CD4-positive, alpha-beta T cell (primary cell): ENCODE measurements at regions of chr17 and their contacts with region 1.

Region 1: DNA sequence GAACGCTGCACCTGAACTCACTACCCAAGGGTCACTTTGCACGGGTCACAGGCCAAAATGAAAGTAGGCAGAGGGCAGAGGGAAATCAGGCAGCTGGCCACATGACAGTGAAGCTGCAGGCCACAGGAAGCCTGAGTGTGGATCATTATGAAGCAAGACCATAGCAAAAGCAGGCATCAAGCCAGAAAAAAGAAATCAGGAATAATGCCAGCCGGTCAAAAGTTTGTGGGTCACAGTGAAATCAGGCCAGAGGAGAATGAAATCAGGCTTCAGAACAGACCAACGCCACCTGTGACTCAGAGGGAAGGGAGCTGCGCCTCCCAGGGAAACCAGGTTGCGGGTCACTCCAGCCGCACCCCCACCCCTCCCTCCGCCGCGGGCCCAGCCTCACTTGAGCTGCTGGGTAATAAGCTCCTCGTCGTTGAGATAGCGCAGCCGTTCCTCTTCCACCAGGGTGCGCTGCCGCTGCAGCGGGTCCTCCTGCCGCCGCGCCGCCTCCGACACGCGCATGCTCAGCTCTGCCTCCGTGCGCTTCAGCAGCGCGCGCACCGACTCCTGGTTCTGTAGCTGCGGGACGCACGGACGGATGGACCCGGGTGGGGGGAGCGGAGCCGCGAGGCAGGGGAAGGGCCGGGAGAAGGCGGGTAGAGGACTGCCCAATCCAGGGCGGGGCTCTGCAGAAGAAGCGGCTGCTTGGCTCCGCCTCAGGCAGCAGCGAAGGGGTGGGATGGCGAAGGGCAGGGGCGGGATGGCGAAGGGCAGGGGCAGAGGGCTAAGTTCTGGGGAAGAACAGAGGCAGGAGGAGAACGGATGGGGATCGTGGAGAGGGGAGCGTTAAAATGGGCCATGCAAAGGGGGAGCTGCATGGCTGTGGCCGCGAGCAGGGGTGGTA is 47.7 kb downstream of the SRCIN1 start:
- DNase-seq: peak; percentile 80 to 95 (median 86)
- ATAC-seq: peak; percentile 71
- H3K4me3 ChIP-seq: peak overlapping the region; percentile 90
- H3K4me3 Mint-ChIP-seq: peak overlapping the region; percentile 96
- H3K27ac ChIP-seq: no peak overlapping the region
- H3K27ac Mint-ChIP-seq: peak overlapping the region; percentile 35
- H3K4me1 ChIP-seq: peaks cover 52% of the 10 kb centered on the region
- H3K4me1 Mint-ChIP-seq: peaks cover 26% of the 10 kb centered on the region
- H3K27me3 ChIP-seq: peaks cover 31 to 33% of the 10 kb centered on the region in 2 experiments
- H3K27me3 Mint-ChIP-seq: peaks cover 39% of the 10 kb centered on the region
- CTCF ChIP-seq: peak; percentile 90

Region 2: DNA sequence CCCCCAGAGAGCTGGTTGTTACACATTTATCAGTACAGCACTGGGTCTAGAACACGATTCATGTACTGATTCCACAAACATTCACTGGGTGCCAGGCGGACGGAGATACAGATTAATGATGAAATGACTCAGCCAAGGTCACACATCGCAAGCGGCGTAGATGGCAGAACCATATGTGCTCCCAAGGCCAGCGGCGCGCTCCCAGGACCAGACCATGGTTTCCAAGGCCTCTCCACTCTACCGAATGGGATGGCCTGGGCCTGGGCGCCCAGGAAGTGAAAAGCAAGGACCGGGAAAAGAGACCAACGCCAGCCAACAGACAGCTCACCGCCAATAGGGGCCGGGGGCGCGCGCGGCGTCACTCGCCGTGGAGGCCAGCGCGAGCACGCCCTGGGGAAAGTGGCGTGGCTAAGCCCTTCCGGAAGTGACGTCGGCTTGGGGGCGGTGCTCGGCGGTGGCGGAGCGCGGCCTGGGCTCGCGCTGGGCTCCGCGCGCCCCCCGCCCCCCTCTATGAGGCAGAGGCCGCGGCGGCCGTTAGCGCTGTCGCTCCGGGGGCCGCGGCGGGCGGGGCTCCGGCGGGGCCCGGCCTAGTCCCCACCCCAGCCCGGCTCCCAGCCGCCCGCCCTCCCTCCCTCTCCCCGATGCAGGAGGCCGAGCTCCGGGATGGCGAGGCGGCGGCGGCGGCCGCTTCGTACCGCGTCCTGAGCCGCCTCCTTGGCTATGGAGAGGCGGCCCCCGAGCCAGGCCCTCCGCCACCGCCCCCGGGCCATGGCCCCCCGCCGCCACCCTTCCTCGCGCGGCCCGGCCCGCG is 206.5 kb before region 1 on chr17 and contains the start of gene SOCS7:
- CTCF ChIA-PET with region 1: no interaction called
- POLR2A ChIA-PET with region 1: no interaction called
- intact Hi-C with region 1: loop called in 1 of 2 experiments (anchors 5 kb)
- DNase-seq: peak; percentile 82 to 98 (median 92)
- ATAC-seq: peak; percentile 84
- H3K4me3 ChIP-seq: peak within 1 kb of the TSS; percentile 83
- H3K4me3 Mint-ChIP-seq: peak within 1 kb of the TSS; percentile 99
- H3K27ac ChIP-seq: peak within 1 kb of the TSS; percentile 54 to 83
- H3K27ac Mint-ChIP-seq: peak within 1 kb of the TSS; percentile 83
- H3K4me1 ChIP-seq: peaks cover 34% of the 10 kb centered on the region
- H3K4me1 Mint-ChIP-seq: peaks cover 50% of the 10 kb centered on the region
- H3K27me3 ChIP-seq: no peaks in the 10 kb centered on the region
- H3K27me3 Mint-ChIP-seq: no peaks in the 10 kb centered on the region
- CTCF ChIP-seq: no peak
- total RNA-seq, gene SOCS7: 13.7 to 16.9 TPM

Region 3: DNA sequence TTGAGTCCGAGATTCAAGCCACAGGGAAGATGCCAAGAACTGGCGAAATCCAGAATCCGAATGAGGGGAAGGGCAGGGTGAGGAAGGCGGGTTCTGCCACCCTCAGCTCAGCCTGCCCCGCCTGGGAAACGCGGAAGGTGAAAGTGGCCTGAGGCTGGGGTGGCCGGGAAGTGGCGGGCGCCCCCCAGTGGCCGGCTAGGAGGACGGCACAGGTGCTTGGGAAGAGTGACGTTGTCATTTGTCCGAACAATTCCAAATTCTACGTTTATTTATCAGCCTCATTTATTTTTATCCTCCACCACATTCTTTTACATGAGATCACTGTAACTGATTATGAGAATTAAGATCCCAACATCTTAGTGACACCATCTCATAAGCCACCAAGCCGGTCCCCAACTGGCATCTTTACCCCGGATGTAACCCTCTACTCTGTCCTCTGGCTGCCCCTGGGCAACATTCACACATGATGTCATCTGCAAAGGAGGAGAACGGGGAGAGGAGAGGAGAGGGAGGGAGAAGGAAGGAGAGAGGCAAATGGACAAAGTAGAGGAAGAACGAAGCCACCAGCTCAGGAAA is 26.4 kb after region 1 on chr17:
- CTCF ChIA-PET with region 1: interaction called, 97 read pairs
- POLR2A ChIA-PET with region 1: interaction called, 16 read pairs
- intact Hi-C with region 1: loop called (anchors 1 kb)
- DNase-seq: peak in 13 of 14 experiments; percentile 22 to 77 (median 51)
- ATAC-seq: peak; percentile 88
- H3K4me3 ChIP-seq: no peak overlapping the region
- H3K4me3 Mint-ChIP-seq: no peak overlapping the region
- H3K27ac ChIP-seq: no peak overlapping the region
- H3K27ac Mint-ChIP-seq: no peak overlapping the region
- H3K4me1 ChIP-seq: peaks cover 21% of the 10 kb centered on the region
- H3K4me1 Mint-ChIP-seq: peaks cover 9% of the 10 kb centered on the region
- H3K27me3 ChIP-seq: peaks cover 64 to 85% of the 10 kb centered on the region in 2 experiments
- H3K27me3 Mint-ChIP-seq: peaks cover 86% of the 10 kb centered on the region
- CTCF ChIP-seq: peak; percentile 91

Region 4: DNA sequence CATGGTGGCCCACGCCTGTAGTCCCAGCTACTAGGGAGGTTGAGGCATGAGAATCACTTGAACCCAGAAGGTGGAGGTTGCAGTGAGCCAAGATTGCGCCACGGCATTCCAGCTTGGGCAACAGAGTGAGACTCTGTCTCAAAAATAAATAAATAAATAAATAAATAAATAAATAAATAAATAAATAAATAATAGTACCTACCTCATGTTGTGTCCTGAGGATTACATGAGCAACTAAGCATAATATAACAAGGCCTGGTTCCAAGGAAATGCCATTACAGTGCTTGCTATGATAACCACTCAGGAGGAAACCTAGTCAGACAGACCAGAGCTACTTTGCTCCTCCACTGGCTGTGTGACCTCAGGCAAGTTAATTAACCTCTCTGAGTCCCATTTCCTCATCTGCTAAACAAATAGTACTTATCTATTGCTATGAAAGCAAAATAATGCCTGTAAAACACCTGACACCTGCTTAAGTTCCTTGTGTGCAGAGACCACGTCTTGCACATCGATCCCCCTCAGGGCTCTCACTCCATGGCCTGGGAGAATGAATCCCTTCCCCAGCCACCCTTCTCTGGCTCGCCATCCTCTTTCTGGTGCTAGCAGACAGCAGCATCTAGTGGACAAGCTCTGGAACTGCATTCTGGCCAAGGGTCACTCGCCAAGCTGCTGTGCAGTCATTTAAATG is 109.2 kb after region 1 on chr17:
- CTCF ChIA-PET with region 1: interaction called, 56 read pairs
- POLR2A ChIA-PET with region 1: interaction called, 20 read pairs
- intact Hi-C with region 1: loop called (anchors 1 kb)
- DNase-seq: peak; percentile 18 to 74 (median 33)
- ATAC-seq: peak; percentile 60
- H3K4me3 ChIP-seq: no peak overlapping the region
- H3K4me3 Mint-ChIP-seq: no peak overlapping the region
- H3K27ac ChIP-seq: no peak overlapping the region
- H3K27ac Mint-ChIP-seq: no peak overlapping the region
- H3K4me1 ChIP-seq: no peaks in the 10 kb centered on the region
- H3K4me1 Mint-ChIP-seq: peaks cover 5% of the 10 kb centered on the region
- H3K27me3 ChIP-seq: peaks cover 36 to 42% of the 10 kb centered on the region in 2 experiments
- H3K27me3 Mint-ChIP-seq: peaks cover 73% of the 10 kb centered on the region
- CTCF ChIP-seq: peak; percentile 98

Region 5: GRCh38 chr17:38729886-38730525 is 171.9 kb after region 1 on chr17 and contains the start of gene CISD3:
- CTCF ChIA-PET with region 1: interaction called, 17 read pairs
- POLR2A ChIA-PET with region 1: interaction called, 11 read pairs
- intact Hi-C with region 1: loop called (anchors 1 kb)
- DNase-seq: peak; percentile 67 to 96 (median 84)
- ATAC-seq: peak; percentile 70
- H3K4me3 ChIP-seq: peak within 1 kb of the TSS; percentile 71
- H3K4me3 Mint-ChIP-seq: peak within 1 kb of the TSS; percentile 99
- H3K27ac ChIP-seq: peak within 1 kb of the TSS; percentile 60 to 80
- H3K27ac Mint-ChIP-seq: peak within 1 kb of the TSS; percentile 89
- H3K4me1 ChIP-seq: peaks cover 89% of the 10 kb centered on the region
- H3K4me1 Mint-ChIP-seq: peaks cover 85% of the 10 kb centered on the region
- H3K27me3 ChIP-seq: no peaks in the 10 kb centered on the region
- H3K27me3 Mint-ChIP-seq: no peaks in the 10 kb centered on the region
- CTCF ChIP-seq: peak; percentile 54
- total RNA-seq, gene CISD3: 4.7 to 5.7 TPM

Region 6: GRCh38 chr17:38740806-38741205 is 182.7 kb after region 1 on chr17:
- CTCF ChIA-PET with region 1: no interaction called
- POLR2A ChIA-PET with region 1: no interaction called
- intact Hi-C with region 1: no loop called
- DNase-seq: no peak
- ATAC-seq: no peak
- H3K4me3 ChIP-seq: no peak overlapping the region
- H3K4me3 Mint-ChIP-seq: no peak overlapping the region
- H3K27ac ChIP-seq: no peak overlapping the region
- H3K27ac Mint-ChIP-seq: no peak overlapping the region
- H3K4me1 ChIP-seq: no peaks in the 10 kb centered on the region
- H3K4me1 Mint-ChIP-seq: peaks cover under 1% of the 10 kb centered on the region
- H3K27me3 ChIP-seq: peaks cover 5 to 10% of the 10 kb centered on the region in 2 experiments
- H3K27me3 Mint-ChIP-seq: peaks cover 17% of the 10 kb centered on the region
- CTCF ChIP-seq: no peak

Region 7: GRCh38 chr17:38752119-38752929 is 194.2 kb after region 1 on chr17 and contains the start of gene PSMB3:
- CTCF ChIA-PET with region 1: no interaction called
- POLR2A ChIA-PET with region 1: interaction called, 3 read pairs
- intact Hi-C with region 1: loop called in 1 of 2 experiments (anchors 5 kb)
- DNase-seq: peak; percentile 86 to 100 (median 93)
- ATAC-seq: peak; percentile 85
- H3K4me3 ChIP-seq: peak within 1 kb of the TSS; percentile 90
- H3K4me3 Mint-ChIP-seq: peak within 1 kb of the TSS; percentile 99
- H3K27ac ChIP-seq: peak within 1 kb of the TSS; percentile 80 to 93
- H3K27ac Mint-ChIP-seq: peak within 1 kb of the TSS; percentile 83
- H3K4me1 ChIP-seq: peaks cover 69% of the 10 kb centered on the region
- H3K4me1 Mint-ChIP-seq: peaks cover 38% of the 10 kb centered on the region
- H3K27me3 ChIP-seq: peaks cover 31 to 33% of the 10 kb centered on the region in 2 experiments
- H3K27me3 Mint-ChIP-seq: peaks cover 27% of the 10 kb centered on the region
- CTCF ChIP-seq: no peak
- total RNA-seq, gene PSMB3: 46.6 to 55.0 TPM